Activated CD4-positive, alpha-beta T cell treated with anti-CD3 and anti-CD28 coated beads, Interleukin-2, amount 10 ng/mL, durations not matched to agents 24 days and 14 days (primary cell): ENCODE measurements at regions of chr3 and their contacts with region 1.

Region 1: GRCh38 chr3:156816800-156817645 is 9.1 kb upstream of the LEKR1 start:
- DNase-seq: peak; percentile 97
- H3K4me3 Mint-ChIP-seq: peak overlapping the region; percentile 92
- H3K27ac Mint-ChIP-seq: peak overlapping the region; percentile 98
- H3K4me1 Mint-ChIP-seq: peaks cover 52% of the 10 kb centered on the region
- H3K27me3 Mint-ChIP-seq: no peaks in the 10 kb centered on the region

Region 2: GRCh38 chr3:156554842-156555687 is 262.0 kb before region 1 on chr3 and contains the start of gene SSR3:
- intact Hi-C with region 1: loop called (anchors 2 kb)
- DNase-seq: peak; percentile 100
- H3K4me3 Mint-ChIP-seq: peak within 1 kb of the TSS; percentile 97
- H3K27ac Mint-ChIP-seq: peak within 1 kb of the TSS; percentile 96
- H3K4me1 Mint-ChIP-seq: peaks cover 48% of the 10 kb centered on the region
- H3K27me3 Mint-ChIP-seq: no peaks in the 10 kb centered on the region
- total RNA-seq, gene SSR3: 151 and 153 TPM in 2 replicates

Region 3: GRCh38 chr3:156787926-156788663 is 28.9 kb before region 1 on chr3:
- intact Hi-C with region 1: loop called (anchors 2 kb)
- DNase-seq: no peak
- H3K4me3 Mint-ChIP-seq: no peak overlapping the region
- H3K27ac Mint-ChIP-seq: peak overlapping the region; percentile 32
- H3K4me1 Mint-ChIP-seq: peaks cover 45% of the 10 kb centered on the region
- H3K27me3 Mint-ChIP-seq: no peaks in the 10 kb centered on the region